ENCODE measurements at regions of chr20 and their contacts with region 1.

Region 1: DNA sequence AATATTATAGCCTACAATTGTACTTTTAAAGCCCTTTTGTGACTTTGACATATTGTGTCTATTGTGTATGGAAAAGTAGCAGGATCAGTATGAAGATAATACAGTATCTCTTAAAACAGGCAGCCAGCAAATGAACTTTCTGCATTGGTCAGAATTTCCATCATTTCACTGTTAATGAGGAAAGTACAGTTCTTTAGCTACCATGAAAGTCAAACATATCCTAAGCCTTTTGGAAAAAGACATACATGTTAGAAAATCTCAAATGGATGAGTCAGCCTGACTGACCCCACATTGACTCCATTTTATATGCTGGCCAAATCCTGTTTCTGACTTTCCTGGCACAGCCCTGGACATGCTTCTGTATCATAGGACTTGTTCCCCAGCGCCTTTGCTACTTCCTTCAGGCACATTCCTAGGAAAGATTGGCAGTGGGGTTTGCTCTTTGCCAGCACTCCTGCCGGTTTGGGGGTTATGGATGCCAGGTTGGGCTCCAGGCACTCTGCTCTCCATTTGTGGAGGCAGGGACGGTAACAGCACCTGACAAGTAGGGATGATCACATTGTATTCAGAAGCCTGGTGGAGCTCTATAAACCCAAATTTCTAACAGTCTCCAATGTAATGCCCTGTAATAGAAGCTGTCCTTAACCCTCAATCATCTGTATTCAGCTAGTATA is 43.7 kb downstream of the TOP1 start:
- DNase-seq: peak; percentile 90
- ATAC-seq: peak; percentile 93
- H3K4me3 ChIP-seq: peak overlapping the region; percentile 15; the same call in 1 of the 2 replicates
- H3K27ac ChIP-seq: peak overlapping the region; percentile 82
- H3K4me1 ChIP-seq: peaks cover 40% of the 10 kb centered on the region
- H3K27me3 ChIP-seq: no peaks in the 10 kb centered on the region
- CTCF ChIP-seq: no peak

Region 2: DNA sequence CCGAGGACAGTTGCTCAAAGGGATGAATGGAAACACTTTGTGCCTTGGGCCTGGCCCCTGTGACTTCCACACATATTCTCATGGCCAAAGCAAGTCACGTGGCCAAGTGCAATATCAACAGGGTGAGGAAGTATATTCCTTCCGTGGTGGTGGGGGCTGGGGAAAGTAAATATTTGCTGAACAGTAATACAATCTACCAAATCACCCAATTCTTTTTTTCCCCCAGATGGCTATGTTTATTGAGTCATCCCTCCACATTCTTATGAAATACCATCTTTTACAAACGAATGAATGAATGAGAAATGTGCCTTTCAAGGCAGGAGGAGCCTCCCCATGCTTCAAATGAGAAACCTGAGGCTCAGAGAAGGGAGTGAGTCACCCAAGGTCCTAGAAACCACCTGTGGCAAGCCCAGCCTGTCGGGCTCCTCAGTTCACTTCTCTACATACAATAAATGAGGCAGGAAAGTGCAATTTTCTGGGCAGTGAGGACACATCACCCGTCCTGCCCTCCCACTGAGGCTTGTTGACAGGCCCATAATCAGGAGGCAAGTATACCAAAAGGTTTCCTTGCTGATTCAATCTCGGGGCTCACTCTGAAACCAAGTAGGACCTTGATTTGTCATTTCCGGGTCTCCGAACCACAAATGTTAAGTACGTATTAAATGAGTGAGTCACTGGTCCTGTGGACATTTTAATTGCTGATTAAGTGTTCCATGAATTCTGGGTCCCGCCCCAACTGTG is 69.0 kb before region 1 on chr20:
- CTCF ChIA-PET with region 1: no interaction called
- POLR2A ChIA-PET with region 1: no interaction called
- intact Hi-C with region 1: loop called (anchors 1 kb)
- DNase-seq: peak; percentile 99
- ATAC-seq: peak; percentile 71
- H3K4me3 ChIP-seq: peak overlapping the region; percentile 49
- H3K27ac ChIP-seq: peak overlapping the region; percentile 99
- H3K4me1 ChIP-seq: peaks cover 50% of the 10 kb centered on the region
- H3K27me3 ChIP-seq: no peaks in the 10 kb centered on the region
- CTCF ChIP-seq: no peak

Region 3: GRCh38 chr20:41057999-41058896 is 14.1 kb before region 1 on chr20:
- CTCF ChIA-PET with region 1: no interaction called
- POLR2A ChIA-PET with region 1: interaction called, 3 read pairs
- intact Hi-C with region 1: loop called (anchors 1 kb)
- DNase-seq: peak; percentile 92
- ATAC-seq: peak; percentile 94
- H3K4me3 ChIP-seq: 0 out of 2 replicates have a peak overlapping the region, but pooled peaks have one; percentile 20
- H3K27ac ChIP-seq: peak overlapping the region; percentile 58
- H3K4me1 ChIP-seq: peaks cover 35% of the 10 kb centered on the region
- H3K27me3 ChIP-seq: no peaks in the 10 kb centered on the region
- CTCF ChIP-seq: no peak

Region 4: GRCh38 chr20:41119546-41120235 is 47.4 kb after region 1 on chr20:
- CTCF ChIA-PET with region 1: no interaction called
- POLR2A ChIA-PET with region 1: no interaction called
- intact Hi-C with region 1: loop called (anchors 2 kb)
- DNase-seq: peak; percentile 86
- ATAC-seq: peak; percentile 78
- H3K4me3 ChIP-seq: no peak overlapping the region
- H3K27ac ChIP-seq: peak overlapping the region; percentile 74
- H3K4me1 ChIP-seq: peaks cover 31% of the 10 kb centered on the region
- H3K27me3 ChIP-seq: no peaks in the 10 kb centered on the region
- CTCF ChIP-seq: no peak

Measured in PC-3 (cell line).